RWPE1 (cell line): ENCODE measurements at regions of chr20 and their contacts with region 1.

Region 1: GRCh38 chr20:50120897-50121693 is 8.1 kb upstream of the UBE2V1 start:
- DNase-seq: peak; percentile 91
- H3K27ac ChIP-seq: peak overlapping the region; percentile 56
- CTCF ChIP-seq: peak; percentile 99

Region 2: DNA sequence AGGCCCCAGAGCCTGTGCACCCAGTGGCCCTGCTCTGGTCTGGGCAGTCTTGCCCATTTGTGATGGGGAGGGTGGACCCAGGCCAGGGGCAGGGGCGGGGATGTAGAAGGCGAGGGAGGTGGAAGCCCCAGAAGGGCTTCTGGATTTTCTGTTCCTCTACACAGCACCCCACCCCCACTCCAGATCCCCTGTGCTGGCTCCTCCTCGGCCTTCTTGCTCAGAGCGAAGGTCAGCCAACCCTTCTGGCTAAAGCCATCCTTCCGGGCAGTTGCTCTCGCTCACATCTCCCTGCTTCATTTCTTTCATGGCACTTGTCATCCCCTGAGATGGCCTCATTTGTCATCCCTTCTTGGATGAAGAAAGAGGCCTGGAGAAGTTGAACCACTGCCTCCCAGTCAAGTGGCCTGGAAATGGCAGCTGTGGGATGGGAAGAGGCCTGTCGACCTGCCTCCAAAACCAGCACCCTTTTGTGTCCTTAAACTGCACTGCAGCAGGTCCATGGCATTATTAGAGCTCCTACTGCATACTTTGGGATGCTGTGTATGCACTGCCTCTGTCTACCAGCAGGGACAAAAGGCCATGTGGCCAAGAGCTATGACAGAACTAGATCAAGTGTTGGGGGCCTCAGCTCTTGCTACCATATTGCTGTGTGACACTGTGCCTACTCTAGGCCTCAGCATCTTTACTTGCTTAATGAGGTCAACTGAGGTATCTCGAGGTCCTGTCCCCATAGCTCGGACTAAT is 12.6 kb after region 1 on chr20:
- CTCF ChIA-PET with region 1: interaction called, 29 read pairs
- POLR2A ChIA-PET with region 1: interaction called, 3 read pairs
- DNase-seq: no peak
- H3K27ac ChIP-seq: peak overlapping the region; percentile 37
- CTCF ChIP-seq: no peak

Region 3: DNA sequence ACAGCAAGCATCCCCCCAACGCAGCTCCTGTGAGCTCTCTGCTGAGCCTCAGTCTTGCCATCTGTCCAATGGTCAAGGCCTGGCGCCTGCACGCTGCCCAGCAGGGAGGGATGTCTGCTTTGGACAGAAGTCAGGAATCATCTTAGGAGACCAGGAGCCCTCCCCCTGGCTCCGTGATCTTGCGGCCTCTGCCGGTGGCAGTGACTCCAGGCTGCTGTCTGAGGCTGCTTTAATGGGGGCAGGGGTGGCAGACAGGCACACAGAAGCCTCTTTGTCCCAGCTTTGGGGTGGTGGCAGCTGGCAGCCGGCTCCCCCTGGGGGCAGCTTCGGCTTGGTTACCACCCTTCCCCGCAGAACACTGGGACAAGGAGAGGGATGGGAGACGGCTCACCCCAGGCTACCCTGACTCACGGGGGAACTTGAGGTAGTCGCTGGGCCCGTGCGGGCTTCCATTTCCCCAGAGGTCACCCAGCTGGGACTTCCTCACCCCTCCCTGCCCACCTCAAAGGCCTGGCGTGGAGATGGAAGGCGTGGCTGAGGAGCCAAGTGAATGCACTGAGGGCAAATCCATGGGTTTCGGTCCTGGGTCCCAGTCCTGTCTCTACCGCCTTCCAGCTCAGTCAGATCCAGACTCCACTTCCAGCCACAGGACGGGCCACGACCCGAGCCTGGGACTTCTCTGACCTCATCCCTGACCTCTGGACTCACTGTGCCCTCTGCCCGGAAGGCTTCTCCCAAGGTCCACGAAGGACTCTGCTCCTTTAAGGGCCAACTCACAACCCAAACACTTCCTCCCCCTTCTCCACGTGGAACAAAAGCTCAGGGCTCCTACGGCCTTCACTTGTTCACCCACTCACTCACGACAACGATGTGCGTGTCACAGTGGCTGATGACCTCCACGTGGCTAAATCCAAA is 17.6 kb after region 1 on chr20:
- CTCF ChIA-PET with region 1: interaction called, 29 read pairs
- POLR2A ChIA-PET with region 1: interaction called, 3 read pairs
- DNase-seq: no peak
- H3K27ac ChIP-seq: peak overlapping the region; percentile 98
- CTCF ChIP-seq: no peak

Region 4: GRCh38 chr20:50165684-50166554 is 44.8 kb after region 1 on chr20:
- CTCF ChIA-PET with region 1: interaction called, 121 read pairs
- POLR2A ChIA-PET with region 1: interaction called, 3 read pairs
- DNase-seq: peak; percentile 100
- H3K27ac ChIP-seq: peak overlapping the region; percentile 94
- CTCF ChIP-seq: no peak

Region 5: DNA sequence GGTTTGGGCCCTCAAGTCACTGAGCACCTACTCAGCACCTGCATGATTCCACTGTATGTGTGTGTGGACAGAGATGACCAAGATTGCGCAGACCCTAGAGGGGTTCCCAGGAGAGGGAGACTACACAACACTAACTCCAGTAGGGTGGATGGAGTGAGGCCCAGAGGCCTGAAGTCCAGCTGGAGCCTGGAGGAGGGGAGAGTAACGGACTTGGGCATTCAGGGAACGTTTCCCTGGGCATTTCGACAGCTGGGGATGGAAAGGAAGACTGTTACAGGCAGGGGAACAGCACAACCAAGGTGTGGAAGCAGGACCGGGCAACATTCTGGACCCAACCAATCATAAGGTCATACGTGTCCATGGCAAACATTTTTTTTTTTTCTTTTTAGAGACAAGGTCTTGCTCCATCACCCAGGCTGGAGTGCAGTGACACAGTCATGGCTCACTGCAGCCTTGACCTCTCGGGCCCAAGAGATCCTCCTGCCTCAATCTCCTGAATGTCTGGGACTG is 58.5 kb after region 1 on chr20:
- CTCF ChIA-PET with region 1: interaction called, 89 read pairs
- POLR2A ChIA-PET with region 1: no interaction called
- DNase-seq: no peak
- H3K27ac ChIP-seq: peak overlapping the region; percentile 29
- CTCF ChIP-seq: peak; percentile 75

Region 6: DNA sequence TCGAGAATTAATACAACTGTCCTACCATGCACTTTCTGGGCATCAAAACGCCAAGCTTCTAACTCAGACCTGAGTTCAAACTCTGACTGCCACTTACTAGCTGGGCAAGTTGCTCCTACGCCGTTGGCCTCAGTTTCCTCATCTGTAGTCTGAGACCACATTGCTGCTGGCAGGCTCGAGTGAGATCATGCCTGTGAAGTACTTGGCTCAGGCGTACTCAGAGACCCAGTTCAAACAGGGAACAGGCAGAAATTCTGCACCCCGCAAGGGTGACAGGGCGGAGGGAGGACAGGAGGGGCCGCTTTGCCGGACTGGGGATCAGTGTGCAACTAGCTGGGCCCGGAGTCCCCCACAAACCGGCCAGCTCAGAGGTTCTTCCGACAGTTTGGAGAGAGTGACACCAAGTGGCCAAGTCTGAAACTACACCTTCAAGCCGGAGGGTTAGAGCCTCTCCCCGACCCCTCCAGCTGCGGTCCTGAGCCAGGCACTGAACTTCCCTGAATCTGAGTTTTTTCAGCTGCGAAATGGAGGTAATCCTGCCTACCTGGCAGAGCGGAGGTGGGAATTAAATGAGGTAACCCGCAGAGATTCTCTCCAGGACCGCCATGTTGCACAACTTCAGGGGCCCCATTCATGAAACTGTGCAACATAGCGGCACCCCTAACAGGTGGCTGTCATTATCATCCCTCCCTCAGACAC is 343.1 kb after region 1 on chr20:
- CTCF ChIA-PET with region 1: interaction called, 12 read pairs
- POLR2A ChIA-PET with region 1: no interaction called
- DNase-seq: peak; percentile 76
- H3K27ac ChIP-seq: peak overlapping the region; percentile 48
- CTCF ChIP-seq: peak; percentile 93

Region 7: DNA sequence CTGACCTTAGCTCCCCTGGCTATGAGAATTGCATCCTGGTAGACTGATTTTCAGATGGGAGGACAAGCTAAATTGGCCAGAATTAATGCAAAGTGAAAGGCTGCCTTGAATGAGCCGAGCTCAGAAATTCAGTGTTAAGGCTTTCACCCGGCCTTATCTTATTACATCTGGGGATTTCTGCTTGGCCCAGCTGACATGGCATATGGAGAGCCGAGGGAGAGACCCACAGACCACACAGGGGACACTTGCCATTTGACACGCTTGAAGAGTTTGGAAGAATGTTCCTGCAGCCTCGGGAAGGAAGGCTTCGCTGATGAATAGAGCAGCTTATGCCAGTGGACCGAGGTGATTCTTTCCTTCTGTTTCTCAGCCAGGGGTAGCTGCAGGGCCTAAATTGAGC is 846.5 kb after region 1 on chr20:
- CTCF ChIA-PET with region 1: no interaction called
- POLR2A ChIA-PET with region 1: no interaction called
- DNase-seq: no peak
- H3K27ac ChIP-seq: no peak overlapping the region
- CTCF ChIP-seq: no peak